Heart right ventricle (tissue), 16 donors: ENCODE measurements at regions of chr9 and their contacts with region 1.

Region 1: GRCh38 chr9:133275105-133276000 is at the start of gene ABO:
- DNase-seq: peak; percentile 44 to 48
- ATAC-seq: peak; percentile 77 to 95 (median 86)
- H3K4me3 ChIP-seq: peak within 1 kb of the TSS; percentile 53 to 82 (median 66)
- H3K27ac ChIP-seq: peak within 1 kb of the TSS; percentile 50 to 93 (median 86)
- H3K4me1 ChIP-seq: peaks cover 0 to 23% (median 3%) of the 10 kb centered on the region in 9 donors
- H3K27me3 ChIP-seq: peaks cover 0 to 53% (median 27%) of the 10 kb centered on the region in 7 donors
- CTCF ChIP-seq: peak; percentile 13 to 69 (median 40)
- total RNA-seq, gene ABO: 0.25 to 2.7 (median 1.6) TPM

Region 2: GRCh38 chr9:133238851-133239532 is 36.4 kb before region 1 on chr9:
- intact Hi-C with region 1: loop called in 1 of 10 experiments (anchors 2 kb)
- DNase-seq: peak; percentile 70 to 72
- ATAC-seq: peak; percentile 42 to 81 (median 60)
- H3K4me3 ChIP-seq: peak overlapping the region; percentile 12 to 52 (median 41)
- H3K27ac ChIP-seq: peak overlapping the region; percentile 72 to 96 (median 90)
- H3K4me1 ChIP-seq: peaks cover 15 to 44% (median 26%) of the 10 kb centered on the region in 9 donors
- H3K27me3 ChIP-seq: peaks cover 0 to 7% (median 0%) of the 10 kb centered on the region in 7 donors
- CTCF ChIP-seq: peak; percentile 49 to 86 (median 76)